MCF 10A (cell line): ENCODE measurements at regions of chr13 and their contacts with region 1.

Region 1: GRCh38 chr13:30617315-30618185 is at the start of gene USPL1:
- DNase-seq: peak; percentile 97
- H3K4me3 Mint-ChIP-seq: no peak within 1 kb of the TSS
- H3K27ac Mint-ChIP-seq: no peak within 1 kb of the TSS
- H3K4me1 Mint-ChIP-seq: peaks cover 20% of the 10 kb centered on the region
- H3K27me3 Mint-ChIP-seq: no peaks in the 10 kb centered on the region
- CTCF ChIP-seq: no peak
- total RNA-seq, gene USPL1: 9.8 and 11.8 TPM in 2 replicates

Region 2: DNA sequence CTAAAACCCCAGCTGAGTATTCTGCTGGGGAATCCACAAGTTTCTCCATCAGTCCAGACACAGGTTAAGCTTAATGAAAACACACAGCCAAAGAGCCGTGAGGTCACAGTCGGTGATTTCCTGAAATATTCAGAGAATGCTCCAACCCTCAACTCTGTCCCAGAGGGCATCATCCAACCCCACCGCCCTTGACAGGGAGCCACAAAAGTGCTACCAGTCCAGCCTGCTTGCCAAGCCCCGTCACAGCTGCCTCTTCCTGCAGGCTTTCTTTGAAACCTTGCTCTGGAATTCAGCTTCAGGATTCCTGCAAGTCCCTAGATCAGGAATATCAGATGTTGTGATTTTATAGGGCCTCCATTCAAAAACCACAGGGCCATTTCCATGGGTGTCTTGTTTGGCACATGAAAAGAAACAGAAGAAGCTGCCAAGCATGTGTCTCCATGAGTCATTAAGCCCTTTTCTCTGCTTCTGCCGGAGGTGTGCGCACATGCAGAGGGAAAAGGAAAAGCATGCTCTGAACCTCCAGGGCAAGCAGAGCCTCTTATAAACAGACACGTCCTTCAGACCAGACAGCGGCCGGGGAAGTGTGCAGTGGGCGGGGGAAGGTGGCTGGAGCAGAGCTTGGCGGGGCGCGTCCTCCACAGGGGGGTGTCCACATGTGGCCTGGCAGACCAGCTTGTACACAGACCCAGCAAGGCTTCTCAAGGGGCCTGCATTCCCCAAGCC is 474.9 kb before region 1 on chr13:
- CTCF ChIA-PET with region 1: no interaction called
- POLR2A ChIA-PET with region 1: interaction called, 24 read pairs
- intact Hi-C with region 1: no loop called
- DNase-seq: peak; percentile 94
- H3K4me3 Mint-ChIP-seq: peak overlapping the region; percentile 61
- H3K27ac Mint-ChIP-seq: peak overlapping the region; percentile 98
- H3K4me1 Mint-ChIP-seq: peaks cover 36% of the 10 kb centered on the region
- H3K27me3 Mint-ChIP-seq: no peaks in the 10 kb centered on the region
- CTCF ChIP-seq: no peak

Region 3: GRCh38 chr13:30429721-30430694 is 187.5 kb before region 1 on chr13:
- CTCF ChIA-PET with region 1: no interaction called
- POLR2A ChIA-PET with region 1: interaction called, 31 read pairs
- intact Hi-C with region 1: no loop called
- DNase-seq: peak; percentile 89
- H3K4me3 Mint-ChIP-seq: peak overlapping the region; percentile 32
- H3K27ac Mint-ChIP-seq: peak overlapping the region; percentile 57
- H3K4me1 Mint-ChIP-seq: peaks cover 13% of the 10 kb centered on the region
- H3K27me3 Mint-ChIP-seq: no peaks in the 10 kb centered on the region
- CTCF ChIP-seq: no peak

Region 4: GRCh38 chr13:30639671-30640070 is 22.1 kb after region 1 on chr13:
- CTCF ChIA-PET with region 1: interaction called, 3 read pairs
- POLR2A ChIA-PET with region 1: interaction called, 11 read pairs
- intact Hi-C with region 1: no loop called
- DNase-seq: no peak
- H3K4me3 Mint-ChIP-seq: no peak overlapping the region
- H3K27ac Mint-ChIP-seq: no peak overlapping the region
- H3K4me1 Mint-ChIP-seq: peaks cover 10% of the 10 kb centered on the region
- H3K27me3 Mint-ChIP-seq: no peaks in the 10 kb centered on the region
- CTCF ChIP-seq: no peak

Region 5: DNA sequence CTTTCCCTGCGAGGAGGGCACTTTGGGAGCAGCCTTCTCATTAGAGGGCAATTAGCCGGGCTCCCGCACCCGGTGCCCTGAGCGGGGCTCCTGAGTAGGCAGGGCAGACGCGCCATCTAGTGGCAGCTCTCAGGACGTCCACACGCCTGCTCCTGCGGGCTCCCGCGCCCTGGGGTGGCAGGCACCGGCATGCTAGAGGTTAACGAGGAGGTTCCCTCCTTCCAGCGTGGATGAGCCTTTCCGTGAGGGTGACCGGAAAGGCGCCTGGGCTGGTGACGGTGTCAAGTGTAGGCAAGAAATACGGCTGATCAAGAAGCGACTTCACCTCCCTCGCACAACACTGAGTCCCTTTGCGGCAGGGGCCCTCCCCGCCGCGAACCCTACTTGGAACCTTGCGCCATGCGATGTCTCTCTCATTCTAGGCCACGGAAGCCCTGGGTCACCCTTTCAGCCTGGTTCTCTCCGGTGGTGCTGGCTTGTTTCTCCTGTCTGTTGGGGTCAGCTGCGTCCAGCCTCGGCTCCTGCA is 185.5 kb after region 1 on chr13:
- CTCF ChIA-PET with region 1: interaction called, 5 read pairs
- POLR2A ChIA-PET with region 1: interaction called, 14 read pairs
- intact Hi-C with region 1: loop called (anchors 2 kb)
- DNase-seq: peak; percentile 80
- H3K4me3 Mint-ChIP-seq: peak overlapping the region; percentile 68
- H3K27ac Mint-ChIP-seq: peak overlapping the region; percentile 7
- H3K4me1 Mint-ChIP-seq: peaks cover 11% of the 10 kb centered on the region
- H3K27me3 Mint-ChIP-seq: no peaks in the 10 kb centered on the region
- CTCF ChIP-seq: peak; percentile 96